Endothelial cell of umbilical vein (primary cell): ENCODE measurements at regions of chr20 and their contacts with region 1.

Region 1: GRCh38 chr20:37192137-37192854 is 12.9 kb upstream of the MROH8 start:
- DNase-seq: peak; percentile 85
- H3K4me3 ChIP-seq: no peak overlapping the region
- H3K27ac ChIP-seq: no peak overlapping the region
- H3K4me1 ChIP-seq: no peaks in the 10 kb centered on the region
- H3K27me3 ChIP-seq: no peaks in the 10 kb centered on the region
- CTCF ChIP-seq: peak; percentile 84 to 92
- POLR2A ChIP-seq: no peak

Region 2: GRCh38 chr20:36688630-36689029 is 503.7 kb before region 1 on chr20:
- CTCF ChIA-PET with region 1: no interaction called
- POLR2A ChIA-PET with region 1: no interaction called
- dilution Hi-C with region 1: no loop called
- intact Hi-C with region 1: no loop called
- DNase-seq: no peak
- H3K4me3 ChIP-seq: no peak overlapping the region
- H3K27ac ChIP-seq: no peak overlapping the region
- H3K4me1 ChIP-seq: no peaks in the 10 kb centered on the region
- H3K27me3 ChIP-seq: no peaks in the 10 kb centered on the region
- CTCF ChIP-seq: no peak
- POLR2A ChIP-seq: no peak

Region 3: GRCh38 chr20:37007898-37008649 is 184.2 kb before region 1 on chr20:
- CTCF ChIA-PET with region 1: interaction called, 10 read pairs
- POLR2A ChIA-PET with region 1: no interaction called
- dilution Hi-C with region 1: no loop called
- intact Hi-C with region 1: no loop called
- DNase-seq: peak; percentile 42
- H3K4me3 ChIP-seq: no peak overlapping the region
- H3K27ac ChIP-seq: no peak overlapping the region
- H3K4me1 ChIP-seq: no peaks in the 10 kb centered on the region
- H3K27me3 ChIP-seq: no peaks in the 10 kb centered on the region
- CTCF ChIP-seq: peak in 1 of 2 donors; percentile 10
- POLR2A ChIP-seq: no peak

Region 4: DNA sequence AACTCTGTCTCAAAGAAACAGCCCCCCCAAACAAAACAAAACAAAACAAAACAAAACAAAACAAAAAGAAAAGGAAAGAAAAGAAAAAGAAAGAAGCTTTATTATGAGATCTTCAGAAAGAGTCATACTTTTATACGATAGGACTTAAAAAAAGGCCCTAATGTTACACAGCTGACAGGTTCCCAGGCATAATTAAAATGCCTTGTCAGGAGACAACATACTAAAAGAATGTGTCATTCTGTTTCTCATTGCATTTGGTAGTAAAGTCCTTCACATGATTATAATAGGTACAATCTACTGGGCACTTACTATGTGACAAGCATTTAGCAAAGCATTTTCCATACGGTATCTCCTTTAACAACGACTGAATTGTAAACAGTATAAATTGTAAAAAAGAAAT is 49.6 kb before region 1 on chr20:
- CTCF ChIA-PET with region 1: no interaction called
- POLR2A ChIA-PET with region 1: no interaction called
- dilution Hi-C with region 1: no loop called
- intact Hi-C with region 1: no loop called
- DNase-seq: no peak
- H3K4me3 ChIP-seq: no peak overlapping the region
- H3K27ac ChIP-seq: no peak overlapping the region
- H3K4me1 ChIP-seq: no peaks in the 10 kb centered on the region
- H3K27me3 ChIP-seq: no peaks in the 10 kb centered on the region
- CTCF ChIP-seq: no peak
- POLR2A ChIP-seq: no peak

Region 5: DNA sequence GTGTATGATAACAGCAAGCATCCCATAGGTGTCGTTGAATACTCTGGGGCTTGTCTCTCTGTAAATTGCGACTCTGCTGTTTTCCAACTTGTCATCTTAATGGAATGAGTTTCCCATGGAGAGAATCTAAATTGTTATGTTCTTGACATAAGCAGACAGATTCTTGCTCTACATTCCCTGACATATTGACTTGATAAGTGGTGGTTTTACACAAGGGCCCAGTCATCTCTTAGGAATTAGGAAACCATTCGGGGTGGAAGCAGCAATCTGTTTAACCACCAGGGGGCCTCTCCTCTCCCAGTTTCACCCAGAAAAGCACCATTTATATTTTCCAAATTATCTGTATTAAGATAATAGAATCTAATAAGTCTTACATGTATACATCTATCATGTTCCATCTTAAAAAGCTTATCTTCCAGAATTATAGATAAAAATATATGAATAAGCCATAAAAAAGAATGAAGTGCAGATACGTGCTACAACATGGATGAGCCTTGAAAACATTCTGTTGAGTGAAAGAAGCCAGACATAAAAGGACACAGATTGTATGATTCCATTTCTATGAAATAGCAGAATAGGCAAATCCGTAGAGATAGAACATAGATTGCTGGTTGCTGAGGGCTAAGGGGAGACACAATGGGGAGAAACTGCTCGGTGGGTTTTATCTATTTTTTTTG is 10.1 kb after region 1 on chr20:
- CTCF ChIA-PET with region 1: interaction called, 14 read pairs
- POLR2A ChIA-PET with region 1: no interaction called
- dilution Hi-C with region 1: no loop called
- intact Hi-C with region 1: no loop called
- DNase-seq: peak; percentile 65
- H3K4me3 ChIP-seq: no peak overlapping the region
- H3K27ac ChIP-seq: peak overlapping the region; percentile 19
- H3K4me1 ChIP-seq: no peaks in the 10 kb centered on the region
- H3K27me3 ChIP-seq: no peaks in the 10 kb centered on the region
- CTCF ChIP-seq: peak; percentile 67 to 79
- POLR2A ChIP-seq: no peak

Region 6: DNA sequence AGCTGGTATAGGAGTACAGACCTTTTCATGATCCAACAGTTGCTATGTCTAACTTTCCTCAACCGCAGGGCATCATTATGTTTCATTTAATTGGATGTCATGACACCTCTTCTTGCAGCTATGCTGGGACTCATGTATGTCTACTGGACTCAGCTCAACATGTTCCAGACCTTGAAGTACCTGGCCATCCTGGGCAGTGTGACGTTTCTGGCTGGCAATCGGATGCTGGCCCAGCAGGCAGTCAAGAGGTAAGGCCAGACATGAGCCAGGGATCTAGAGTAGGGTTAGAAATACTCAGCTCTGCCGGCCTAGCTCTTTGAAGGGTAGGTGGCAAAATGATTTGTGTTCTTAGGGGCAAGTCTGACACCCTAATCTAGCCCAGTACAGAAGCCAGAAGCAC is 44.2 kb after region 1 on chr20:
- CTCF ChIA-PET with region 1: interaction called, 10 read pairs
- POLR2A ChIA-PET with region 1: no interaction called
- dilution Hi-C with region 1: no loop called
- intact Hi-C with region 1: no loop called
- DNase-seq: no peak
- H3K4me3 ChIP-seq: no peak overlapping the region
- H3K27ac ChIP-seq: no peak overlapping the region
- H3K4me1 ChIP-seq: no peaks in the 10 kb centered on the region
- H3K27me3 ChIP-seq: no peaks in the 10 kb centered on the region
- CTCF ChIP-seq: no peak
- POLR2A ChIP-seq: no peak

Region 7: GRCh38 chr20:37270576-37271420 is 78.5 kb after region 1 on chr20:
- CTCF ChIA-PET with region 1: interaction called, 13 read pairs
- POLR2A ChIA-PET with region 1: no interaction called
- dilution Hi-C with region 1: no loop called
- intact Hi-C with region 1: no loop called
- DNase-seq: no peak
- H3K4me3 ChIP-seq: no peak overlapping the region
- H3K27ac ChIP-seq: no peak overlapping the region
- H3K4me1 ChIP-seq: no peaks in the 10 kb centered on the region
- H3K27me3 ChIP-seq: no peaks in the 10 kb centered on the region
- CTCF ChIP-seq: no peak
- POLR2A ChIP-seq: no peak

Region 8: DNA sequence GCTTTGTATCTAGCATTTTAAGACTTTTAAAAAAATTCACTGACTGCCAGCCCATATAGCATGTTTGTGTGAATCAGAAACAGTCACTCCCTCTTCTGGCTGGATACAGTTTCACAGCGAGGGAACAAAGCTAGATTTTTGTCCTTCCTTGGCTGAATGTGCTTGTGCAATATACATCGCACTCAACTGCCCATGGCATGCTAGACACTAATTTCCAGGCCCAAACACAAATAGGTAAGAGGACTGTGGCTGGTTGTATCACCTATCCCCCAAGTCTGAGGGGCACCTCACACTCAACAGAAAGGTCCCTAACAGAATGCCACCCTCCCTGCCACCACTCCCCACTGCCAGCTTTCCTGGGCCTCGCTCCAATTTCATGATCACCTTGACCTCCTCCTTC is 351.5 kb after region 1 on chr20:
- CTCF ChIA-PET with region 1: interaction called, 15 read pairs
- POLR2A ChIA-PET with region 1: no interaction called
- dilution Hi-C with region 1: no loop called
- intact Hi-C with region 1: no loop called
- DNase-seq: peak; percentile 55
- H3K4me3 ChIP-seq: no peak overlapping the region
- H3K27ac ChIP-seq: no peak overlapping the region
- H3K4me1 ChIP-seq: peaks cover 11% of the 10 kb centered on the region
- H3K27me3 ChIP-seq: peaks cover 3 to 7% of the 10 kb centered on the region in 2 experiments
- CTCF ChIP-seq: peak; percentile 14 to 43
- POLR2A ChIP-seq: no peak